OCI-LY7 (cell line): ENCODE measurements at regions of chr3 and their contacts with region 1.

Region 1: DNA sequence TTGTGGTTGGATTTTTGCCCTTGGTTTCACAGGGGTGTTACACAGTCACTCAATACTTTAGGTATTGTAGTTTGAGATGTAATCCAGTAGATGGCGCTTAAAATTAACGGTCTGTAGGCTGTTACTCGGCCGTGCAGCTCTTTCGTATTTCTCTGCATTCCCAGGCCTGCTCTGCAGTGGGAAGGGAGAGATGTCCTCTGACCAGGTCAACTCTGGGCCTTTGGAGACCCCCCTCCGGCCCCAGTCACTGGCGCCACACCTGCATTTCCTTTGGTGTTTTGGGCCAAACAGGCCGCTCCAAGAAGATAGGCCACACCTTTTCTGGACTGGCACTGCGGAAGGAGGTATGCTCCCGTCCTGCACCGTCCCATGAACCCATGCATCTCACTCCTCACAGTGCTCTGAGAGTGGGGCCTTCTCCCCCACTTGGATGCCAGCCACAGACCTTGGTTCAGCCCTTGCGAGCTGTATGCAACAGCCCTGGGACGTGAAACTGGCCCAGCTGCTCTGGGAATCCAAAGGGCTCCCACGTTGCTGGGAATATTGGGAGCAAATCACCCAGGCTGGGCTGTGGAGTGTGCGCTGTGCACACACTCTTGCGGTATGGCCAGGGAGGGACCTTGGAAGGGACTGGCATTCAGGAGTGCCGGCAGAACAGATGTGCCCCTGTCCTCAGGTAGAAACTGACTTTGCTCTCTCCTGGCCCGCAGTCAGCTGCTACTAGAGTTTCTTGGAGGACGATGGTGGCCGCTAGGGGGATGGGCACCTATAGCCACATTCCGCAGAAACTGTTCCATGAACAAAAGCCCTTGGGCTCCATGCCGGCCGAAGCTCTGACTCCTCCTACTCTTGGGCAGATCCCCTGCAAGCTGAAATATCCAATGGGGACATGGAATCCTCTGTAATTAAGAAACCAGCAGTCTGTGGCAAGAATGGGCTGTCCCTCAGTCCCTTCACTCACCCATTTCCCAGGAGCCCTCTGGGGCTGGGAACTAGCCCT is 410.5 kb upstream of the CADM2 start:
- DNase-seq: peak; percentile 30
- H3K4me3 ChIP-seq: no peak overlapping the region
- H3K27ac ChIP-seq: no peak overlapping the region
- H3K4me1 ChIP-seq: no peaks in the 10 kb centered on the region
- CTCF ChIP-seq: peak; percentile 79

Region 2: DNA sequence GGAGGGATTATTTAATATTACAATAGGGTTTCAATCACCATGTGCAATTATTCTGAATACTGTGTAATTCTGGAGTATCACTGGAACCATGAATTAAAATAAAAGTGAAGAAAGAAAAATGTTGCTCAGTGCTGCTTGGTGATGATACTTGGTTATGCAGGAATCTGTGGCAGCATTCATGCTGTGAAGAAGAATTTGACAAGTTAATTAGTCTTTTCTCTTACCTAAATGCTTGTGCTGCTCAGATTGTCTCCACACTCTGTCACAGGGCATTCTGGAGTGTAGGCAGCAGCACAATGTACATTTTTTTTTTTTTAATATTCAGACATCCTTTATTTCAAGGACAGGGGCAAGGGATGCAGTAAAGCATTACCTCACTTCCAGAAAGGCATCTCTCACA is 338.8 kb before region 1 on chr3:
- CTCF ChIA-PET with region 1: no interaction called
- POLR2A ChIA-PET with region 1: no interaction called
- intact Hi-C with region 1: no loop called
- DNase-seq: no peak
- H3K4me3 ChIP-seq: no peak overlapping the region
- H3K27ac ChIP-seq: no peak overlapping the region
- H3K4me1 ChIP-seq: no peaks in the 10 kb centered on the region
- CTCF ChIP-seq: no peak

Region 3: GRCh38 chr3:84440306-84440705 is 108.0 kb before region 1 on chr3:
- CTCF ChIA-PET with region 1: no interaction called
- POLR2A ChIA-PET with region 1: no interaction called
- intact Hi-C with region 1: no loop called
- DNase-seq: no peak
- H3K4me3 ChIP-seq: no peak overlapping the region
- H3K27ac ChIP-seq: no peak overlapping the region
- H3K4me1 ChIP-seq: no peaks in the 10 kb centered on the region
- CTCF ChIP-seq: no peak

Region 4: DNA sequence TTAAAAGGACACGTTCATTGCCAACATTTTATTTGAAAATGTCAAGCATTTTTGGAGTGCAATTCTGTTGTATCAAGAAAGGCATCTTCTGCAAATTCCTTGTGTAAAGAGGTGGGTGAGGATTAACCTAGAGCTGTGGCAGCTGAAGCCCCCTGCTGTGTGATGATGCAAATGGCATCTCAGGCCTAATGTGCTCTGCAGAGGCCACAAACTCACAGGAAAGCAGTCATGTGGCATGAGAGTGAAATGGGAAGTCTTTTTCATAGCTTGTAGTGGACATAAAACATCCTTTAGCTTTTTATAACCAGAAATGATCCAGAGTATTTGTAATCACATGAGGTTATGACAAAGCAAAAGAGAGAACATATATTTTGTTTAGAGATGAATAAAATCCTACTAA is 416.9 kb after region 1 on chr3:
- CTCF ChIA-PET with region 1: no interaction called
- POLR2A ChIA-PET with region 1: no interaction called
- intact Hi-C with region 1: loop called (anchors 10 kb)
- DNase-seq: no peak
- H3K4me3 ChIP-seq: no peak overlapping the region
- H3K27ac ChIP-seq: no peak overlapping the region
- H3K4me1 ChIP-seq: no peaks in the 10 kb centered on the region
- CTCF ChIP-seq: 0 out of 2 replicates have a peak, but pooled peaks have one; percentile 34

Region 5: DNA sequence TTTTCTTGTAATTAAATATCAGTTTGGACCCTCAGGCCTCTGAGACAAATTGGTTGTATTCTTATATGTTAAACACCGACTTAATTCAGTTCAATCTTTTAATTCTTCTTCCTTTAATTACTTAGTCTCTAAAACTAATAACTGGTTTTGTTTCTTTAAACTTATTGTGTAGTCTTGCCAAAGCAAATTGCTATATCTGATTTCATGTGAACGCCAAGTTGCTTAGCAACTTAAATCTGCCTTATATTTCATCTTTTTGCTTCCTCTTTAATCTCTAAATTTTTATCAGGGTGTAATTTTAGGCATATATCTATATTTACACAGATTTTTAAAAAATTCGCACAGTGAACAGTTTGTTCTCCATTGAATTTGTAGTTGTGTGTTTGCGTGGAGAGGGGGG is 492.7 kb after region 1 on chr3:
- CTCF ChIA-PET with region 1: no interaction called
- POLR2A ChIA-PET with region 1: no interaction called
- intact Hi-C with region 1: no loop called
- DNase-seq: no peak
- H3K4me3 ChIP-seq: no peak overlapping the region
- H3K27ac ChIP-seq: no peak overlapping the region
- H3K4me1 ChIP-seq: no peaks in the 10 kb centered on the region
- CTCF ChIP-seq: no peak

Region 6: DNA sequence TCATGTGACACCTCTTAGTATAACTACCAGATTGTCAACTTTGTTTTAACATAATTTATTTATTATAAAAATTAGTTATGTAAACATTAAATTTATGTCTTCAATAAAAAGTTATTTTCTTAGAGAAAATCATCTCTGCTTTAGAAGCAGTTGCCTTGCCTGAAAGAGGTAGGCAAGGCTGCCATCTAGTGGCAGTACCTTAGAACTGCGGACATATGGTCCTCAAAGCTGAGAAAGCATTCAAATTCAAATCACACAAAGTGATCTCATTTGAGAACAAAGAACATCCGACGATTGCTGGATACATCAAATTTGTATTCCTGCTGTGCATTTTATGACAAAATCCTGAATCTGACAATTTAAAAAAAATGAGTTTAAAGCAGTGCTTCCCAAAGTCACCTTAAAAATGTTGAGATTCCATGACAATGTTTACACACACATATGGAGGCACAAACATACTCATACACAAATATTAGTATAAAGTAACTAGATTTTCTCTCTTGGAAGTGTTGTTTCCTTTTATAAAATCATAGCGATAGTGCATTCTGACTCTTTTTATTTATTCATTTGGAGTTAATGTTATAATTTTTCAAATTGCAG is 1027.9 kb after region 1 on chr3:
- CTCF ChIA-PET with region 1: interaction called, 3 read pairs
- POLR2A ChIA-PET with region 1: no interaction called
- intact Hi-C with region 1: loop called (anchors 5 kb)
- DNase-seq: peak; percentile 56
- H3K4me3 ChIP-seq: no peak overlapping the region
- H3K27ac ChIP-seq: no peak overlapping the region
- H3K4me1 ChIP-seq: no peaks in the 10 kb centered on the region
- CTCF ChIP-seq: peak; percentile 88